Activated CD8-positive, alpha-beta T cell treated with anti-CD3 and anti-CD28 coated beads, Interleukin-2, amount 10 ng/mL, durations not matched to agents 7 days and 5 days (primary cell): ENCODE measurements at regions of chr1 and their contacts with region 1.

Region 1: DNA sequence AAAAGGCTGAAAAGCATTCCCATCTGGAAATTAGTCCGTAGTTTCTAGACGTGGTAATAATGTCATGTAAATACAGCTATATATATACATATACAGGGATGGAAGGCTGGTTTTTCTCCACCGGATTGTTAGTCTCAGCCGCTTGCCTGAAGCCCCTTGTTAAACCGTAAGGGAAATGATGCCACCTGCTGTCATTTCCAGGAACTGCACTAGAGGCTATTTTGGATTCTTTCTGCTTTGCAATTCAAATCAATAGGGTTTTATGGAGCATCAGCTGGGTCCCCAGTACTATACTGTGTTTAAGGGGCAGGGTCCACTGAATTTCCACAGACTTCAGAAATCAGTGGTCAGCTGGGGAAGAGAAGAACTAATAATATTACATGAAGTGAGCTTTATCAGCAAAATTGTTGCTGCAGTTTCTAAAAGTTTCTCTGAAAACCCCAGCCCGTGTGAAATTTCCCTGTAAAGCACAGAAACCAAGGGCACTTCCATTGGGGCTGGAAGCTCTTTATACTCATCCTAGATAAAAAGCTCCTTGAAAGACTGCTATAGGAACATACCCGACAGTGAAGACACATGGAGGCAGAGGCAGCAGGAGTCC is 33.8 kb upstream of the MPZL1 start:
- DNase-seq: peak; percentile 88
- ATAC-seq: peak; percentile 71
- H3K4me3 Mint-ChIP-seq: no peak overlapping the region
- H3K27ac Mint-ChIP-seq: peak overlapping the region; percentile 13
- H3K4me1 Mint-ChIP-seq: peaks cover 10% of the 10 kb centered on the region
- H3K27me3 Mint-ChIP-seq: no peaks in the 10 kb centered on the region

Region 2: GRCh38 chr1:167563579-167564246 is 124.3 kb before region 1 on chr1:
- CTCF ChIA-PET with region 1: interaction called, 11 read pairs
- POLR2A ChIA-PET with region 1: no interaction called
- DNase-seq: no peak
- ATAC-seq: no peak
- H3K4me3 Mint-ChIP-seq: no peak overlapping the region
- H3K27ac Mint-ChIP-seq: no peak overlapping the region
- H3K4me1 Mint-ChIP-seq: no peaks in the 10 kb centered on the region
- H3K27me3 Mint-ChIP-seq: peaks cover 11% of the 10 kb centered on the region

Region 3: GRCh38 chr1:167627865-167628641 is 60.0 kb before region 1 on chr1:
- CTCF ChIA-PET with region 1: interaction called, 13 read pairs
- POLR2A ChIA-PET with region 1: interaction called, 4 read pairs
- DNase-seq: peak; percentile 89
- ATAC-seq: peak; percentile 83
- H3K4me3 Mint-ChIP-seq: peak overlapping the region; percentile 98
- H3K27ac Mint-ChIP-seq: peak overlapping the region; percentile 91
- H3K4me1 Mint-ChIP-seq: peaks cover 66% of the 10 kb centered on the region
- H3K27me3 Mint-ChIP-seq: no peaks in the 10 kb centered on the region

Region 4: DNA sequence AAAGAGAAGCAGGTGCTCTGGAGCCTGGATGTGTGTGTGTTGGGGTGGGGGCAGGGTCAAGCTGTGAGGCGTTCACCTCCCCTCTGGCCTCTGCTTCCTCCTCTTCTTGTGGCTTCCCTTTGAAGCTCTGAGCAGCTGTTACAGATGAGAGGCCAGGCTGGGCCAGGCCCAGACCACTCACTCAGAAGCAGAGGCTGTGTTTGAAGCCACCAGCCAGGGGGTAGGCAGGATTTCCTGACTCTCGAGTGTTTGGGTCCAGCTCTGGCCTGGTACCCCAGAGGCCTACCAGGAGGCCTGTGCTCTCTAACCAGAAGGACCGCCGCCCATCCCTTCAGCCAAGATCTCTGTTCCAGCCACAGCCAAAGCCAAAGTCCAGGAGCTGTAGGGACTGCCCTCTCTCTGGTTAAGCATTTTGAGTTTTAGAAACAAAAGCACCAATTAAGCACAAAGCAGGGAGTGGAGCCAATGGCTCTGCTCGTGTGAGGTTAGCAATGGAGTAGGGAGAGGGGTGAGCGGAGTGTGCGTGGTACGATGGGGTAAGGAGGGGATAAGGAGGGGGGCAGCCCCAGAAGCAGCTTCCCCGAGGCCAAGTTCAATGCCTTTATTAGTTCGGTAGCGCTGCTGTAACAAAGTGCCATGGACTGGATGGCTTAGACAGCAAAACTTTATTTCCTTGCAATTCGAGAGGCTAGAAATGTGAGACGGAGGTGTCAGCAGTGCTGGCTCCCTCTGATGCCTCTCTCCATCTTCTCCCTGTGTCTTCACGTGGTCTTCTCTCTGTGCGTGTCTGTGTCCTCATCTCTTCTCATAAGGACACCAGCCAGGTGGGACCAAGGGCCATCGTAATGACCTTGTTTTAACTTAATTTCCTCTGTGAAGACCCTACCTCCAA is 37.5 kb before region 1 on chr1:
- CTCF ChIA-PET with region 1: interaction called, 20 read pairs
- POLR2A ChIA-PET with region 1: interaction called, 3 read pairs
- DNase-seq: peak; percentile 47
- ATAC-seq: peak; percentile 72
- H3K4me3 Mint-ChIP-seq: peak overlapping the region; percentile 38
- H3K27ac Mint-ChIP-seq: peak overlapping the region; percentile 87
- H3K4me1 Mint-ChIP-seq: peaks cover 72% of the 10 kb centered on the region
- H3K27me3 Mint-ChIP-seq: no peaks in the 10 kb centered on the region

Region 5: GRCh38 chr1:167715157-167715999 is 27.4 kb after region 1 on chr1:
- CTCF ChIA-PET with region 1: interaction called, 16 read pairs
- POLR2A ChIA-PET with region 1: no interaction called
- DNase-seq: peak; percentile 94
- ATAC-seq: peak; percentile 54
- H3K4me3 Mint-ChIP-seq: peak overlapping the region; percentile 91
- H3K27ac Mint-ChIP-seq: peak overlapping the region; percentile 96
- H3K4me1 Mint-ChIP-seq: peaks cover 34% of the 10 kb centered on the region
- H3K27me3 Mint-ChIP-seq: peaks cover 11% of the 10 kb centered on the region